CD8-positive, alpha-beta T cell (primary cell): ENCODE measurements at regions of chr1 and their contacts with region 1.

Region 1: GRCh38 chr1:17447501-17447992 is 8.1 kb upstream of the RCC2 start:
- DNase-seq: no peak
- ATAC-seq: no peak
- H3K4me3 ChIP-seq: no peak overlapping the region
- H3K4me3 Mint-ChIP-seq: no peak overlapping the region
- H3K27ac ChIP-seq: no peak overlapping the region
- H3K27ac Mint-ChIP-seq: no peak overlapping the region
- H3K4me1 ChIP-seq: no peaks in the 10 kb centered on the region
- H3K4me1 Mint-ChIP-seq: no peaks in the 10 kb centered on the region
- H3K27me3 ChIP-seq: peaks cover 0 to 2% of the 10 kb centered on the region in 2 experiments
- H3K27me3 Mint-ChIP-seq: no peaks in the 10 kb centered on the region
- CTCF ChIP-seq: no peak

Region 2: DNA sequence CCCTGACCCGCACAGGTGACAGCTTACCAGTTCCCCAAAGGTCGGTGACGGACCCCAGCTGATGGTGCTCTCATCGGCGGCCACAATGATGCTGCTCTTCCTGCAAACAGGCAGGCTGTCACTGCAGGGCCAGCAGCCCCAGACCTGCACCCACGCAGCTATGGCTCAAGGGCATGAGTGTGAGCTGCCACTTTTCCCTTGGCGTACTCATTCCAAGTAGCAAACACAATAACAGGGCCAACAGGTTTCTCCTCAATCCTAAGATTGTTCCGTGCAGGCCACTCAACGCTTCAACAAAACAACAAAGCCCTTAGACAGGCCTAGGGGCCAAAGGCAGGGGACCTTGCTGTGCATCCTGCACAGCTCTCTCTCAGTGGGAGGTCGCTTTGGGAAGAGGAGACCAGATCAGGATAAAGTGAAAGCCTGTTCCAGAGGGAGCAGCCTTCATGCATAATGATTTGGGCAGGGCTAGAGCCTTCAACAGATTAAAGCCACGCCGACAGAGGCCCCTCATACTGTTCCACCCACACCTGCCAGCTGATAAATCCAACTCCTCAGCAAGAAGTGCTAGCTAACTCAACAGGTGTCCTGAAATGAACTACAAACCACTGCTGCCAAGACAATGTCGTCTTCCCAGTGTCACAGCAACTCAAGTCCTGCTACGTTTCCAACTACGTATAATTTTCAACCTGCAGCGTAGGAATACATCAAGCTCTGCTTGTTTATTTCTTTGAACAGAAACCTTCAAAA is 35.3 kb before region 1 on chr1:
- CTCF ChIA-PET with region 1: no interaction called
- POLR2A ChIA-PET with region 1: no interaction called
- intact Hi-C with region 1: loop called in 1 of 2 experiments (anchors 5 kb)
- DNase-seq: no peak
- ATAC-seq: no peak
- H3K4me3 ChIP-seq: no peak overlapping the region
- H3K4me3 Mint-ChIP-seq: no peak overlapping the region
- H3K27ac ChIP-seq: no peak overlapping the region
- H3K27ac Mint-ChIP-seq: no peak overlapping the region
- H3K4me1 ChIP-seq: no peaks in the 10 kb centered on the region
- H3K4me1 Mint-ChIP-seq: no peaks in the 10 kb centered on the region
- H3K27me3 ChIP-seq: no peaks in the 10 kb centered on the region
- H3K27me3 Mint-ChIP-seq: no peaks in the 10 kb centered on the region
- CTCF ChIP-seq: no peak

Region 3: DNA sequence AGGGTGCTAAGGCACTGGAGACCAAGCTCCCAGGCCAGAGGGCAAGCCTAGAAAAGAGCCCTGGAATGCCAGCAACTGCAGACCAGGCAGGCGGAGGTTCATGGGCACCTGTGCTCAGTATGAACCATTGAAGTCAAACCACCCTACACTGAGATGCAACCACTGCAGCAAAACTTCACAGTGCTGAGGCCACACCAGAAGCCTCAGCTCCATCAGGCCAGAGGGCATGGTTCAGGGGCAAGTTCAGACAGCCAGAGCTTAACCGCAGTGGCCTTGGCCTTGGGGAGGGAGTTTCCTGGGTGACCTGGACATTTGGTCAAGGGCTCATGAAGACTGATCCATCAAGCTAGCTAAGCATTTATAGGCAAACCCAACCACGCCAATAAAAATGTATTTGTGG is 15.1 kb before region 1 on chr1:
- CTCF ChIA-PET with region 1: no interaction called
- POLR2A ChIA-PET with region 1: no interaction called
- intact Hi-C with region 1: no loop called
- DNase-seq: no peak
- ATAC-seq: no peak
- H3K4me3 ChIP-seq: no peak overlapping the region
- H3K4me3 Mint-ChIP-seq: no peak overlapping the region
- H3K27ac ChIP-seq: no peak overlapping the region
- H3K27ac Mint-ChIP-seq: no peak overlapping the region
- H3K4me1 ChIP-seq: peaks cover 45% of the 10 kb centered on the region
- H3K4me1 Mint-ChIP-seq: peaks cover 61% of the 10 kb centered on the region
- H3K27me3 ChIP-seq: no peaks in the 10 kb centered on the region
- H3K27me3 Mint-ChIP-seq: no peaks in the 10 kb centered on the region
- CTCF ChIP-seq: no peak

Region 4: GRCh38 chr1:18234790-18235242 is 787.3 kb after region 1 on chr1:
- CTCF ChIA-PET with region 1: no interaction called
- POLR2A ChIA-PET with region 1: no interaction called
- intact Hi-C with region 1: no loop called
- DNase-seq: peak in 1 of 9 experiments; percentile 8
- ATAC-seq: no peak
- H3K4me3 ChIP-seq: no peak overlapping the region
- H3K4me3 Mint-ChIP-seq: no peak overlapping the region
- H3K27ac ChIP-seq: no peak overlapping the region
- H3K27ac Mint-ChIP-seq: no peak overlapping the region
- H3K4me1 ChIP-seq: no peaks in the 10 kb centered on the region
- H3K4me1 Mint-ChIP-seq: no peaks in the 10 kb centered on the region
- H3K27me3 ChIP-seq: peaks cover 0 to 2% of the 10 kb centered on the region in 2 experiments
- H3K27me3 Mint-ChIP-seq: peaks cover 23% of the 10 kb centered on the region
- CTCF ChIP-seq: no peak